Astrocyte of the cerebellum (primary cell): ENCODE measurements at regions of chr11 and their contacts with region 1.

Region 1: DNA sequence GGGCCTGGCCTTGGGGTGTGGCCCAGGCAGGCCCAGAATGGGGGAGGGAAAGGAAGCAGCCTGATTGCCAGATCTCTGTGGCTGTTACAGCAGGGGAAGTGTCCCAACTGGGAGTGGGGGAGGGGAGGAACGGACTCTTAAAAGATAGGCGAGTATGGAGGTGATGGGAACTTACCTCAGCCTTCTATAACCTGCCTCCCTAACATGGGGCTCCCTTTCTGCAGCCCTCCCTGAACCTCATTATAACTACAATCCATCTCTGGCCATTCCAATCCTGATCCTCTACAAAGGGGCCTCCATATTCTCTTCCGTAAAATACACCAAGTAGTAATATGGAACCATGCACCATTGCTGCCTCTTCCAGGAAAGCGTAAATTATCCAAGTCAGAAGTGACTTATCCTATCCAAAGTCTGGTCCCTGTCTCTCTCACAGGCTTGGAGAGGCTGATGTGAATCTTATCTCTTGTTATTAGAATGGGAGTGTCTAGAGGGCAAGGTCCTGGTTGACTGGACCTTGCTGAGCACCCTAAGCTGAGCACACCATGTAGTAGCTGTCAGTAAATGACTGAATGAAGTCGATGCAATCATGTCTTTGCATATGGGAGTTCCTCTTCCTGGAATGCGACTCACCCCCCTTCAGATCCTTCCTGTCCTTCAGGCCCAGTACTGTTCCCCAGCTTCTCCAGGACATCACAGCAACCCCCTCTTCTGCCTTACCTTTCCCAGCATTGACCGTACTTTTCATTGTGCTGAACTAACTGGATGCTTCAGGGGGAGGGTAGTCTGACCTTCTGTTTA is 5.9 kb downstream of the RHOG start:
- DNase-seq: no peak
- H3K4me3 ChIP-seq: no peak overlapping the region
- CTCF ChIP-seq: no peak

Region 2: DNA sequence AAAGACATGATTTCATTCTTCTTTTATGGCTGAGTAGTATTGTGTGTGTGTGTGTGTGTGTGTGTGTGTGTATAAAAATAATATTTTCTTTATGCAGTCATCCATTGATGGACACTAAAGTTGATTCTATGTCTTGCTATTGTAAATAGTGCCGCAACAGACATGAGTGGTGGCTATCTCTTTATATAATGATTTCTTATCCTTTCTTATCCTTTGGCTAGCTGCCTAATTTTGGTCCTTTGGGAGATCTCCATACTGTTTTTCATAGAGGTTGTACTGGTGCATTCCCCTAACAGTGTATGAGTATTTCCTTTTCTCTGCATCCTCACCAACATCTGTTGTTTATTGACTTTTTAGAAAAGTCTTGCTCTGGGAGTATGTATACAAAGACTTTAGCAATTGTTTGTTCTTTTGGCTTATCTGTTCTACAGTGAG is 127.6 kb after region 1 on chr11:
- in situ Hi-C with region 1: loop called (anchors 10 kb)
- DNase-seq: no peak
- H3K4me3 ChIP-seq: no peak overlapping the region
- CTCF ChIP-seq: no peak